CD4-positive, alpha-beta T cell (primary cell): ENCODE measurements at regions of chr12 and their contacts with region 1.

Region 1: GRCh38 chr12:27434673-27435565 is 11.6 kb upstream of the SMCO2 start:
- DNase-seq: peak in 10 of 14 experiments; percentile 1 to 56 (median 6)
- ATAC-seq: peak; percentile 74
- H3K4me3 ChIP-seq: no peak overlapping the region
- H3K4me3 Mint-ChIP-seq: no peak overlapping the region
- H3K27ac ChIP-seq: no peak overlapping the region
- H3K27ac Mint-ChIP-seq: no peak overlapping the region
- H3K4me1 ChIP-seq: no peaks in the 10 kb centered on the region
- H3K4me1 Mint-ChIP-seq: peaks cover 8% of the 10 kb centered on the region
- H3K27me3 ChIP-seq: no peaks in the 10 kb centered on the region
- H3K27me3 Mint-ChIP-seq: peaks cover 17% of the 10 kb centered on the region
- CTCF ChIP-seq: peak; percentile 47

Region 2: DNA sequence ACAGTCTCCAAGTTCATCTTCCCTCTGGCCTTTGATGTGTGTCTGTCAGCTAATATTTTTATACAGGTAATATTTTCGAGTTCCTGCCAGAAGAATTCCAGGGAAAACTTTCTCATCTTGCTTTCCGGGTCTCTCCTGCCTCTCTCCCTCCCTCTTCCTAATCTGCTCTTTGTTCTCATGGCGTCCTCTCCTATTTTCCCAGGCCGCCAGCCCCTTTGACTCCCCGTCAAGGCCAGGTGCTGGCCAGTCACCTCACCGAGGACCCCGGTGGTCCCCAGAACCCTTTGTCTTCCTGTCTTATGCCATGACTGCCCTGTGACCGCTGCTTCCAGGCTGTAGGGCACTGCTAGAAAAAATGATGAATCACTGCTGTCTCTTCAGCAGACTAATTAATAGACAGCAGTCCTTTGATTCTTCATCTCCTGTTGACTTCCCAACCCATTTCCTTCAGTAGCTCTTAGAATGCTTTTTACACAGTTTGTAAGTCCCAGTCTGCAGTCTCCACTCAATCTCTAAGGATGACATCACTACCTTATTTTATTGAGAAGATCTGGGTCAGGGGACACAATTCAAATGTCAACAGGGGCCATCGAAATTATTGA is 129.8 kb after region 1 on chr12:
- CTCF ChIA-PET with region 1: no interaction called
- POLR2A ChIA-PET with region 1: no interaction called
- intact Hi-C with region 1: loop called in 1 of 2 experiments (anchors 5 kb)
- DNase-seq: no peak
- ATAC-seq: no peak
- H3K4me3 ChIP-seq: no peak overlapping the region
- H3K4me3 Mint-ChIP-seq: no peak overlapping the region
- H3K27ac ChIP-seq: no peak overlapping the region
- H3K27ac Mint-ChIP-seq: no peak overlapping the region
- H3K4me1 ChIP-seq: no peaks in the 10 kb centered on the region
- H3K4me1 Mint-ChIP-seq: no peaks in the 10 kb centered on the region
- H3K27me3 ChIP-seq: no peaks in the 10 kb centered on the region
- H3K27me3 Mint-ChIP-seq: no peaks in the 10 kb centered on the region
- CTCF ChIP-seq: no peak

Region 3: DNA sequence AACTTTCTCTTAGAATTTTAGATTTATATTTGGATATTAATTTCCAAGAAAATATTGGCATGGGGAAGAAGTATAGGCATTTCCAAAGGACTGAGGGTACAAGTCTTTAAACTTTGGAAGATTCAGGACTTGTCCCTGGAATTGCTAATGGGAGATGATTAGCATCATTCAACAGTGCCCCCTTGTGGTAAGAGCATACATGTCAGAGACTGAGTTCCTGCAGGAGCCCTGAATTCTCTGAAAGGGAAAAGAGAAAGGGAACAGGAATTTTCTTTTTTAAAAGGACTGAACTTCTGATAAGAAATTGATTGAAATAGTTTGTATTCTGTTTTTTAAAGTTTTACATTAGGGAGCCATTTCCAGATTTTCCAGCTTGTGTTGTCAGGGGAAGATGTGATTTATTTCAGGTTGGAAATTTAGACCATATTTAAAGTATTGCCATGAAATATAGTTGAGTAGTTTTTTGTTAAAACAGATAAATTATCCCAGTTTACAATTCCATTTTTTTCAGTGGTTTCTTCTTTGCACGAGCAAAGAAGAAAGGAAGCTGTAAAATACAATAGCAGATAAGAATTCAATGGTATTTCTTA is 217.3 kb after region 1 on chr12:
- CTCF ChIA-PET with region 1: no interaction called
- POLR2A ChIA-PET with region 1: no interaction called
- intact Hi-C with region 1: loop called (anchors 2 to 5 kb)
- DNase-seq: peak in 7 of 14 experiments; percentile 7 to 70 (median 49)
- ATAC-seq: no peak
- H3K4me3 ChIP-seq: no peak overlapping the region
- H3K4me3 Mint-ChIP-seq: no peak overlapping the region
- H3K27ac ChIP-seq: no peak overlapping the region
- H3K27ac Mint-ChIP-seq: no peak overlapping the region
- H3K4me1 ChIP-seq: no peaks in the 10 kb centered on the region
- H3K4me1 Mint-ChIP-seq: no peaks in the 10 kb centered on the region
- H3K27me3 ChIP-seq: no peaks in the 10 kb centered on the region
- H3K27me3 Mint-ChIP-seq: no peaks in the 10 kb centered on the region
- CTCF ChIP-seq: peak; percentile 97

Region 4: DNA sequence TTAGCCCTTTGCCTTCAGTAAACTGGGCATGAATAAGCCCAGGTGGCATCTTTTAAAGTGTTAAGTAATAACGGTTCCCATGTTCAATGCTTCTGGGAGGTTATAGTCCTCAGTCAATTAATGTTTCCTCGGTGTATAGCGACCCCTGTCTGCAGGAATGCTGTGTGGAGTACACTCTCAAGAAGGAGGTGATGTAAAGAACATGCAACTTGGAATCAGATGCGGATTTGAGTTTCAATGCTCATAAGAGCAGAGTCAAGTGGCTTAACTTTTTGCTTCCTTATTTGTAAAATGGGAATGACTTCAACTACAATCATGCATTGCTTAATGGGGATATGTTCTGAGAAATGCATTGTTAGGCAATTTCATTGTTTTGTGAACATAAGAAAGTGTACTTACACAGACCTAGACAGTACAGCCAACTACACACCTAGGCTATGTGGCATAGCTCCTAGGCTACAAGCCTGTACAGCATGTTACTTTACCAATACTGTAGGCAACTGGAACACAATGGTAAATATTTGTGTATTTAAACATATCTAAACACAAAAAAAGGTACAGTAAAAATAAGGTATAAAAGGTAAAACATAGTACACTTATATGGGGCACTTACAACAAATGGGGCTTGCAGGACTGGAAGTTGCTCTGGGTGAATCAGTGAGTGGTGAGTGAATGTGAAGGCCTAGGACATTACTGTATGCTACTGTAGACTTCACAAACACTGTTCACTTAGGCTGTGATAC is 269.0 kb after region 1 on chr12:
- CTCF ChIA-PET with region 1: no interaction called
- POLR2A ChIA-PET with region 1: no interaction called
- intact Hi-C with region 1: loop called (anchors 1 kb)
- DNase-seq: peak; percentile 38 to 80 (median 58)
- ATAC-seq: peak; percentile 99
- H3K4me3 ChIP-seq: no peak overlapping the region
- H3K4me3 Mint-ChIP-seq: no peak overlapping the region
- H3K27ac ChIP-seq: no peak overlapping the region
- H3K27ac Mint-ChIP-seq: no peak overlapping the region
- H3K4me1 ChIP-seq: no peaks in the 10 kb centered on the region
- H3K4me1 Mint-ChIP-seq: no peaks in the 10 kb centered on the region
- H3K27me3 ChIP-seq: no peaks in the 10 kb centered on the region
- H3K27me3 Mint-ChIP-seq: no peaks in the 10 kb centered on the region
- CTCF ChIP-seq: peak; percentile 76